Kidney (tissue), 22 donors: ENCODE measurements at regions of chr18 and their contacts with region 1.

Region 1: GRCh38 chr18:10006311-10006893 is 92.6 kb downstream of the VAPA start:
- DNase-seq: peak in 2 of 5 donors; percentile 55 to 64
- H3K4me3 ChIP-seq: no peak overlapping the region
- H3K27ac ChIP-seq: no peak overlapping the region
- H3K4me1 ChIP-seq: no peaks in the 10 kb centered on the region
- H3K27me3 ChIP-seq: no peaks in the 10 kb centered on the region
- CTCF ChIP-seq: no peak

Region 2: GRCh38 chr18:9719421-9719981 is 286.9 kb before region 1 on chr18:
- intact Hi-C with region 1: no loop called
- DNase-seq: peak in 2 of 5 donors; percentile 29 to 89
- H3K4me3 ChIP-seq: no peak overlapping the region
- H3K27ac ChIP-seq: no peak overlapping the region
- H3K4me1 ChIP-seq: no peaks in the 10 kb centered on the region
- H3K27me3 ChIP-seq: no peaks in the 10 kb centered on the region
- CTCF ChIP-seq: no peak

Region 3: GRCh38 chr18:9951022-9951859 is 55.2 kb before region 1 on chr18:
- intact Hi-C with region 1: no loop called
- DNase-seq: peak in 3 of 5 donors; percentile 35 to 74 (median 57)
- H3K4me3 ChIP-seq: no peak overlapping the region
- H3K27ac ChIP-seq: no peak overlapping the region
- H3K4me1 ChIP-seq: no peaks in the 10 kb centered on the region
- H3K27me3 ChIP-seq: no peaks in the 10 kb centered on the region
- CTCF ChIP-seq: peak; percentile 48

Region 4: GRCh38 chr18:10072671-10073175 is 66.3 kb after region 1 on chr18:
- intact Hi-C with region 1: no loop called
- DNase-seq: no peak
- H3K4me3 ChIP-seq: no peak overlapping the region
- H3K27ac ChIP-seq: no peak overlapping the region
- H3K4me1 ChIP-seq: peaks cover 0 to under 1% (median 0%) of the 10 kb centered on the region in 3 donors
- H3K27me3 ChIP-seq: no peaks in the 10 kb centered on the region
- CTCF ChIP-seq: no peak

Region 5: DNA sequence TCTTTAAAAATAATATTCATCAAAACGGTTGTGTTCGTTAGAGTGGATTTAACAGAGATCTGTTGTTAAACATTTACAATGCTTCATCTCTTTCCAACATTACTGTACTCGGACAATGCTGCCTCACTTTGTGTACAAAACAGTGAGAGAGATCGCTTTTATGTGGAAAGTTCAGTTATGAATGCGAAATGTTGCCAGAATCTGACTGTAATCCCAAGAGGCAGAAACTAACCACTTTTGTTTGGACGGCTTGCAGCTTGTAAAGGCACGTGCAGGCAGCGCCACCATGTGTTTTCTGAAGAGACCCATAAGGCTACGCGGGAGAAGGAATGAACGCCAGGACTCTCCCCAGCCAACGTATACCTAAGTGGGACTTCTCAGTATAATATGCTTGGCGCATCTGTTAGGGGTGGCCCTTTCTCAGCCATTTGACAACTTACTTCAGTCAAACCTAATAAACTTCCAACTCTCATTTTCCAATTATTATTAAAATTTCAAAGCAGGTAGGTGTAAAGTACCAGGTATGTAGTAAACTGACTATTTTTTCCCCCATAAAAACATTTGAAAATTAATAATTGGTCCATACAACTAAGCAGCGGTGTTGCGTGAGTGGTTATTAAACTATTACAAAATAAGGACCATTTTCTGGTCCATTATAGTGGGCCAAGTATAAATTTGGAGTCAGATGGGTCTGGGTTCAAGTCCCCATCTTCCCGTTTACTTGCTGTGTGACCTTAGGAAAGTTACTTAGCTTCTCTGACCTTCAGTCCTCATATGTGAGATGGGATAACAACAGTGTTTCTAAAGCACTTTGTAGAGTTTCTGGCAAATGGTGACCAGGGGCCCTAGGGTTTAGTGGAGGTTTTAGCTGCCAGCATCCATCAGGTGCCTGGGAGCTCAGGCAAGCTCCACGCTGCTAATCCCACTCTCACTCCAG is 513.9 kb after region 1 on chr18:
- intact Hi-C with region 1: loop called (anchors 10 kb)
- DNase-seq: peak; percentile 85 to 95 (median 92)
- H3K4me3 ChIP-seq: peak overlapping the region; percentile 21 to 31 (median 26)
- H3K27ac ChIP-seq: no peak overlapping the region
- H3K4me1 ChIP-seq: peaks cover 0 to 9% (median 6%) of the 10 kb centered on the region in 3 donors
- H3K27me3 ChIP-seq: no peaks in the 10 kb centered on the region
- CTCF ChIP-seq: peak; percentile 77